Heart left ventricle (tissue), 16 donors: ENCODE measurements at regions of chr6 and their contacts with region 1.

Region 1: DNA sequence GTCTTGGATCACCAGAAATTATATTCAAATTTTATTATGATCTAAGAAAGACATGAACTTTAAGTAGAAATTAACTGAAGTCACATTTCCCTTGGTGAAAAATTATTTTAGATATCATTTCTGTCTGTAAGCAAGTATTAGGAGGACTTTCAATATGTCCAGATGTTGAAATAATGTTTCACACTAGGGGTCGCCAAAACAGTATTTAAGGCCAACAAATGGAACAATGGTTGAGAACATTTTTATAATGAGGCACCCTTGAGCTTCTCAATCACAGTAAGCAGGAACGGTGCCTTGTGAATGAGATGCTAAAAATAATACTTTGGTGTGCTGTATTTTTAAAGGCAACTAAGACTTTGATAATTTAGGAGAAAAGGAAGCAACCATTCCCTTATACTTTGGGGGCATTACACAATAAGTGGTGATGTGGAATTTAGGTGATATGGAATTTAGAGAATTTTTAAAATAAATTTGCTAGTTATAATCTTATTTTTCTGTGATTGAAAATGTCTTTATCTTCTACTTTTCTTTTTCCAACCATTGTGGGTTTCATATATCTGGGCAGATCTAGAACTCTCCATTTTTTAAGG is 9.6 kb upstream of the SF3B5 start:
- DNase-seq: peak in 2 of 5 donors; percentile 21 to 36
- ATAC-seq: peak; percentile 64 to 93 (median 89)
- H3K4me3 ChIP-seq: no peak overlapping the region
- H3K27ac ChIP-seq: no peak overlapping the region
- H3K4me1 ChIP-seq: peaks cover 0 to 7% (median 0%) of the 10 kb centered on the region in 12 donors
- H3K27me3 ChIP-seq: no peaks in the 10 kb centered on the region
- CTCF ChIP-seq: peak; percentile 52 to 90 (median 75)
- POLR2A ChIP-seq: no peak

Region 2: DNA sequence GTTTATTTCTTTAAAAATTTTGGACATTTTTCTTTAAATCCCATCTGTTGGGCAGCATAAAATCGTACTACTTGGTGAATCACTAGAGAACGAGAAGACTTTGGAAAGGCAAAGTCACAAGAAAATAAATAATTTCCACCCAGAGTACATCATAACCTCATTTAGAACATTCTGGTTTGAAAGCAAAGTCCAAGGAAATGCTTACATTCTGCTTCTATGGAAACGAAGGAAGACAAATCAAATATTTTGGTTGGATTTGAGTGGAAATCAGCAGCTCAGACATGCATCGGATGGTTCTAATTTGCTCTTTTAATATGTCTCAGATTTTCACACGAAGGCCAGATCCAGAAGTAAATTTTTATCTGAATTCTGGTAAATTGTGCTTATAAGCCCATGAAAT is 322.5 kb before region 1 on chr6:
- intact Hi-C with region 1: no loop called
- DNase-seq: no peak
- ATAC-seq: no peak
- H3K4me3 ChIP-seq: no peak overlapping the region
- H3K27ac ChIP-seq: peak overlapping the region in 1 of 12 donors; percentile 34
- H3K4me1 ChIP-seq: peaks cover 0 to 13% (median 3%) of the 10 kb centered on the region in 12 donors
- H3K27me3 ChIP-seq: no peaks in the 10 kb centered on the region
- CTCF ChIP-seq: no peak
- POLR2A ChIP-seq: no peak

Region 3: GRCh38 chr6:144149891-144150709 is 45.1 kb after region 1 on chr6 and contains the start of gene STX11:
- intact Hi-C with region 1: loop called in 5 of 10 experiments (anchors 5 to 10 kb)
- DNase-seq: peak; percentile 82 to 90 (median 85)
- ATAC-seq: peak; percentile 80 to 97 (median 94)
- H3K4me3 ChIP-seq: peak within 1 kb of the TSS; percentile 64 to 95 (median 78)
- H3K27ac ChIP-seq: peak within 1 kb of the TSS; percentile 10 to 97 (median 77)
- H3K4me1 ChIP-seq: peaks cover 0 to 51% (median 10%) of the 10 kb centered on the region in 12 donors
- H3K27me3 ChIP-seq: no peaks in the 10 kb centered on the region
- CTCF ChIP-seq: peak in 2 of 12 donors; percentile 21 to 46
- POLR2A ChIP-seq: peak in 1 of 2 donors; percentile 84
- total RNA-seq, gene STX11: 5.4 to 21.0 (median 9.0) TPM

Region 4: GRCh38 chr6:144482142-144482541 is 377.1 kb after region 1 on chr6:
- intact Hi-C with region 1: loop called (anchors 2 to 5 kb)
- DNase-seq: peak; percentile 69 to 77 (median 72)
- ATAC-seq: peak in 2 of 4 donors; percentile 23 to 41
- H3K4me3 ChIP-seq: no peak overlapping the region
- H3K27ac ChIP-seq: no peak overlapping the region
- H3K4me1 ChIP-seq: peaks cover 0 to 38% (median 21%) of the 10 kb centered on the region in 12 donors
- H3K27me3 ChIP-seq: no peaks in the 10 kb centered on the region
- CTCF ChIP-seq: peak; percentile 50 to 80 (median 66)
- POLR2A ChIP-seq: no peak

Region 5: GRCh38 chr6:144931172-144932035 is 826.4 kb after region 1 on chr6:
- intact Hi-C with region 1: loop called in 2 of 10 experiments (anchors 10 kb)
- DNase-seq: peak in 1 of 5 donors; percentile 8
- ATAC-seq: no peak
- H3K4me3 ChIP-seq: no peak overlapping the region
- H3K27ac ChIP-seq: no peak overlapping the region
- H3K4me1 ChIP-seq: no peaks in the 10 kb centered on the region
- H3K27me3 ChIP-seq: no peaks in the 10 kb centered on the region
- CTCF ChIP-seq: peak in 11 of 12 donors; percentile 30 to 65 (median 47)
- POLR2A ChIP-seq: no peak